ENCODE measurements at regions of chr2 and their contacts with region 1.

Region 1: DNA sequence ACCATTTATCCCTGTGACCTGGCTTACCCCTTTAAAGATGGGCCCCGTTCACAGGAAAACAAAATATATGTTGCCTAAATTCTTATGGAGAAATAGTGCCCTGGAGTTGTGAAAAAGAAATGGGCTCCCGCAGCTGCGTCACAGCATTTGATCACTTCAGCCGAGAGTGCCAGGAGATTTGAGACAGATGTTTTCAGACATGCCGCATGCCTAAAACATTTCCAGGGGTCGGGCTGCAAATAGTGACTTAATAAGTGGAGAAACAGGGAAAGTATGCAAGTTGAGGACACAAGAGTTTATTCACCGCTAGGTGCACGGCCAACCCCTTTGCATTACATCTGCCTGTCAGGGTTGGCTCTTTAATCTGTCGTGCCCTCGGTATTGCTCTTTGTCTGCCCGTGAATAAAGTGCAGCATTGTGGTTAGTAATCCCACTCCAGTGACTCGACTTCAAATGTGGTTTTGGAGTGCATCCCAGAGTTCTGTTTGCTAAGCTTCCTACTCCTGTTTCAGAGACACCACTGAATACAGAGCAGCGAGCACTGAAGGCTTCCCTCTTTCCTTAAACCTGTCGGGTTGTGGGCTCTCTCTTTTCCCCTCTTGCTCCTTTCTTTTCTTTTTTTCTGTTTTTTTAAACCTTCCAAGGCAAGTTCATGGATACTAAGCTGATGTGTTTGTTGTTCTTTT is 187.5 kb downstream of the LTBP1 start:
- DNase-seq: peak; percentile 32 to 72
- ATAC-seq: peak; percentile 87 to 91
- H3K4me3 ChIP-seq: no peak overlapping the region
- H3K27ac ChIP-seq: peak overlapping the region; percentile 44 to 64
- H3K4me1 ChIP-seq: peaks cover 42% of the 10 kb centered on the region
- CTCF ChIP-seq: no peak
- EP300 ChIP-seq: no peak
- POLR2A ChIP-seq: no peak
- RAD21 ChIP-seq: peak; percentile 27 to 37; a peak in 3 of 5 replicates

Region 2: GRCh38 chr2:33123216-33123615 is 11.0 kb before region 1 on chr2:
- CTCF ChIA-PET with region 1: interaction called, 21 read pairs
- POLR2A ChIA-PET with region 1: no interaction called
- DNase-seq: no peak
- ATAC-seq: no peak
- H3K4me3 ChIP-seq: no peak overlapping the region
- H3K27ac ChIP-seq: no peak overlapping the region
- H3K4me1 ChIP-seq: peaks cover 9% of the 10 kb centered on the region; the same call in 2 of the 3 replicates
- CTCF ChIP-seq: no peak
- EP300 ChIP-seq: no peak
- POLR2A ChIP-seq: no peak
- RAD21 ChIP-seq: no peak

Region 3: GRCh38 chr2:33214436-33214835 is 80.2 kb after region 1 on chr2:
- CTCF ChIA-PET with region 1: no interaction called
- POLR2A ChIA-PET with region 1: no interaction called
- DNase-seq: peak in 1 of 2 experiments; percentile 51
- ATAC-seq: no peak
- H3K4me3 ChIP-seq: no peak overlapping the region
- H3K27ac ChIP-seq: peak overlapping the region; percentile 73 to 86; a peak in 4 of 6 replicates
- H3K4me1 ChIP-seq: peaks cover 78% of the 10 kb centered on the region
- CTCF ChIP-seq: no peak
- EP300 ChIP-seq: no peak
- POLR2A ChIP-seq: no peak
- RAD21 ChIP-seq: no peak